Naive thymus-derived CD4-positive, alpha-beta T cell (primary cell): ENCODE measurements at regions of chr9 and their contacts with region 1.

Region 1: GRCh38 chr9:125558453-125559092 is 148.4 kb downstream of the MAPKAP1 start:
- DNase-seq: peak in 8 of 9 donors; percentile 18 to 63 (median 55)
- ATAC-seq: peak; percentile 78
- H3K4me3 ChIP-seq: no peak overlapping the region
- H3K4me3 Mint-ChIP-seq: no peak overlapping the region
- H3K27ac ChIP-seq: no peak overlapping the region
- H3K27ac Mint-ChIP-seq: peak overlapping the region in 1 of 9 donors; percentile 28
- H3K4me1 ChIP-seq: no peaks in the 10 kb centered on the region
- H3K4me1 Mint-ChIP-seq: peaks cover 0 to 19% (median 11%) of the 10 kb centered on the region in 7 donors
- H3K27me3 ChIP-seq: no peaks in the 10 kb centered on the region
- H3K27me3 Mint-ChIP-seq: no peaks in the 10 kb centered on the region

Region 2: DNA sequence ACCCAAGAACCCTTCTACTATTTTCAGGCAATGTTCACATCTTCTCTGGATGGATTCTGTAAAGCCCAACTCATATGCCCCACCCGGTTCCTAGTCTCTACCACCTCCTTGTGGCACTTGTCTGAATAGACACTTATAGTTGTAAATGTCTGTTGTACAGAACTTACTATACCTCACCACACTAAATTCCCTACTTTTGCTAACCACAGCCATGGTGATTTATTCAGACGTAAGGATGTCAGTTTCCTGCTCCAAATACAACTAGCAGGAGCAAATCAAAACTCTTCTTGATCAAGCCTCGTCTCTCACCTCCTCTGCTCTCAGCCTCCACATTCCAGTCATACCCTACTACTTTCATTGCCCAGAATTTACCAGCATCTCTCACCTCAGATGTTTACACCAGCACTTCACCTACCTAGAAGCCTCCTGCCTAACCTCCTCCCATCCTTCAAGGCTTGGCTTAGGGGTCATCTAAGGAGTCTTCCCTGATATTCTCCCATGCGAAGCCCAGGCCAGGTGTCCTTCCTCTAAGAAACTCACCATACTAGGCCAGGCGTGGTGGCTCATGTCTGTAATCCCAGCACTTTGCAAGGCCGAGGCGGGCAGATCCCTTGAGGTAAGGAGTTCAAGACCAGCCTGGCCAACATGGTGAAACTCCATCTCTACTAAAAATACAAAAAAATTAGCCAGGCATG is 73.0 kb after region 1 on chr9:
- CTCF ChIA-PET with region 1: interaction called, 3 read pairs
- POLR2A ChIA-PET with region 1: no interaction called
- intact Hi-C with region 1: loop called (anchors 1 kb)
- DNase-seq: peak in 5 of 9 donors; percentile 17 to 37 (median 26)
- ATAC-seq: peak; percentile 59
- H3K4me3 ChIP-seq: no peak overlapping the region
- H3K4me3 Mint-ChIP-seq: peak overlapping the region in 2 of 10 donors; percentile 0 to 24
- H3K27ac ChIP-seq: no peak overlapping the region
- H3K27ac Mint-ChIP-seq: peak overlapping the region in 2 of 9 donors; percentile 28 to 72
- H3K4me1 ChIP-seq: peaks cover 11 to 14% of the 10 kb centered on the region in 2 donors
- H3K4me1 Mint-ChIP-seq: peaks cover 39 to 77% (median 66%) of the 10 kb centered on the region in 7 donors
- H3K27me3 ChIP-seq: no peaks in the 10 kb centered on the region
- H3K27me3 Mint-ChIP-seq: no peaks in the 10 kb centered on the region

Region 3: DNA sequence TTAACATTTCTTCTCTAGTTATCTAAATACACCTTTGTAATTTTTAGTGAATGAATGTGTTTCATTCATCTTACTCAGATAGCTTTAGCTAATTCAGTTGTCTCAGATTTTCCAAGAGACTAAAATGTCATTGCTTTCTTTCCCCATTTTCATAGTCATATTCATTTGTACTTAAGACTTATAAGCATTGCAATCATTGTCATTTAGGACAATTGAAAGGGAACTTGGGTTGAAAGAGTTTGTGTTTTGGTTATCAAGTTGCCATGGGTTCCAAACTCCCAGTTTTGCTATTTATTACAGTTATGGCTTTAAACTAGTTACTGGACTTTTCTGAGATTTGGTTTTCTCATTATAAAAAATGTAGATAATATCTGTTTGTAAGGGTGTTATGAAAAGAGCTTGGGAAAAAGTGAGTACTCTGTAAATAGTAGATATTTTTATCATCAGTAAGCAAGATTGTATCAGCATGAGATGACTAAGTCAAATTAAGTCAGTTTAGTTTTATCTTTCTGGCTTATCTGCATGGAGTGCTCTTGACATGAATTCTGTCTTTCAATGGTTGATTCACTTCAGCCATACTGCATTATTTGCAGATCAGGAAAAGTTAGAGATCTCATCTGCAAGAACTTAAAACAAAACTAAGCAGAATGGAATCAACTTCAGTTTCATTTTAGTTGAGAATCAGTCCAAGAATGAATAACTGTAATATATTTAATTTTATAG is 296.1 kb after region 1 on chr9:
- CTCF ChIA-PET with region 1: no interaction called
- POLR2A ChIA-PET with region 1: no interaction called
- intact Hi-C with region 1: loop called in 1 of 2 experiments (anchors 10 kb)
- DNase-seq: no peak
- ATAC-seq: no peak
- H3K4me3 ChIP-seq: no peak overlapping the region
- H3K4me3 Mint-ChIP-seq: no peak overlapping the region
- H3K27ac ChIP-seq: no peak overlapping the region
- H3K27ac Mint-ChIP-seq: no peak overlapping the region
- H3K4me1 ChIP-seq: no peaks in the 10 kb centered on the region
- H3K4me1 Mint-ChIP-seq: peaks cover 0 to 10% (median 4%) of the 10 kb centered on the region in 7 donors
- H3K27me3 ChIP-seq: no peaks in the 10 kb centered on the region
- H3K27me3 Mint-ChIP-seq: no peaks in the 10 kb centered on the region

Region 4: GRCh38 chr9:126219648-126220063 is 661.1 kb after region 1 on chr9:
- CTCF ChIA-PET with region 1: interaction called, 3 read pairs
- POLR2A ChIA-PET with region 1: no interaction called
- intact Hi-C with region 1: loop called in 1 of 2 experiments (anchors 2 kb)
- DNase-seq: no peak
- ATAC-seq: no peak
- H3K4me3 ChIP-seq: no peak overlapping the region
- H3K4me3 Mint-ChIP-seq: no peak overlapping the region
- H3K27ac ChIP-seq: no peak overlapping the region
- H3K27ac Mint-ChIP-seq: no peak overlapping the region
- H3K4me1 ChIP-seq: no peaks in the 10 kb centered on the region
- H3K4me1 Mint-ChIP-seq: peaks cover 0 to 6% (median 0%) of the 10 kb centered on the region in 7 donors
- H3K27me3 ChIP-seq: no peaks in the 10 kb centered on the region
- H3K27me3 Mint-ChIP-seq: peaks cover 71 to 83% (median 78%) of the 10 kb centered on the region in 5 donors

Region 5: GRCh38 chr9:126228781-126229444 is 670.3 kb after region 1 on chr9:
- CTCF ChIA-PET with region 1: no interaction called
- POLR2A ChIA-PET with region 1: no interaction called
- intact Hi-C with region 1: loop called (anchors 1 to 2 kb)
- DNase-seq: peak; percentile 14 to 69 (median 57)
- ATAC-seq: peak; percentile 90
- H3K4me3 ChIP-seq: no peak overlapping the region
- H3K4me3 Mint-ChIP-seq: peak overlapping the region in 1 of 10 donors; percentile 18
- H3K27ac ChIP-seq: no peak overlapping the region
- H3K27ac Mint-ChIP-seq: peak overlapping the region in 1 of 9 donors; percentile 22
- H3K4me1 ChIP-seq: no peaks in the 10 kb centered on the region
- H3K4me1 Mint-ChIP-seq: peaks cover 0 to 8% (median 0%) of the 10 kb centered on the region in 7 donors
- H3K27me3 ChIP-seq: no peaks in the 10 kb centered on the region
- H3K27me3 Mint-ChIP-seq: peaks cover 19 to 49% (median 42%) of the 10 kb centered on the region in 5 donors